ENCODE measurements at regions of chr2 and their contacts with region 1.

Region 1: GRCh38 chr2:30231212-30231995 is at the start of gene LBH:
- DNase-seq: peak; percentile 93
- ATAC-seq: peak; percentile 44
- H3K4me3 Mint-ChIP-seq: peak within 1 kb of the TSS; percentile 78
- H3K27ac Mint-ChIP-seq: peak within 1 kb of the TSS; percentile 97
- H3K4me1 Mint-ChIP-seq: peaks cover 63% of the 10 kb centered on the region
- H3K27me3 Mint-ChIP-seq: no peaks in the 10 kb centered on the region
- CTCF ChIP-seq: no peak
- total RNA-seq, gene LBH: 127 to 130 TPM

Region 2: GRCh38 chr2:30252723-30253701 is 21.6 kb after region 1 on chr2:
- CTCF ChIA-PET with region 1: interaction called, 216 read pairs
- POLR2A ChIA-PET with region 1: interaction called, 440 read pairs
- intact Hi-C with region 1: loop called (anchors 2 kb)
- DNase-seq: peak; percentile 88
- ATAC-seq: peak; percentile 67
- H3K4me3 Mint-ChIP-seq: peak overlapping the region; percentile 53
- H3K27ac Mint-ChIP-seq: peak overlapping the region; percentile 95
- H3K4me1 Mint-ChIP-seq: peaks cover 96% of the 10 kb centered on the region
- H3K27me3 Mint-ChIP-seq: peaks cover 2% of the 10 kb centered on the region
- CTCF ChIP-seq: no peak

Region 3: GRCh38 chr2:30266051-30266621 is 34.7 kb after region 1 on chr2:
- CTCF ChIA-PET with region 1: interaction called, 216 read pairs
- POLR2A ChIA-PET with region 1: interaction called, 440 read pairs
- intact Hi-C with region 1: loop called (anchors 5 kb)
- DNase-seq: peak; percentile 73
- ATAC-seq: peak; percentile 57
- H3K4me3 Mint-ChIP-seq: peak overlapping the region; percentile 76
- H3K27ac Mint-ChIP-seq: peak overlapping the region; percentile 99
- H3K4me1 Mint-ChIP-seq: peaks cover 81% of the 10 kb centered on the region
- H3K27me3 Mint-ChIP-seq: no peaks in the 10 kb centered on the region
- CTCF ChIP-seq: no peak

Region 4: GRCh38 chr2:30273261-30273861 is 42.0 kb after region 1 on chr2:
- CTCF ChIA-PET with region 1: interaction called, 3 read pairs
- POLR2A ChIA-PET with region 1: interaction called, 90 read pairs
- intact Hi-C with region 1: loop called (anchors 5 kb)
- DNase-seq: peak; percentile 73
- ATAC-seq: peak; percentile 68
- H3K4me3 Mint-ChIP-seq: peak overlapping the region; percentile 28
- H3K27ac Mint-ChIP-seq: peak overlapping the region; percentile 89
- H3K4me1 Mint-ChIP-seq: peaks cover 73% of the 10 kb centered on the region
- H3K27me3 Mint-ChIP-seq: no peaks in the 10 kb centered on the region
- CTCF ChIP-seq: no peak

Region 5: DNA sequence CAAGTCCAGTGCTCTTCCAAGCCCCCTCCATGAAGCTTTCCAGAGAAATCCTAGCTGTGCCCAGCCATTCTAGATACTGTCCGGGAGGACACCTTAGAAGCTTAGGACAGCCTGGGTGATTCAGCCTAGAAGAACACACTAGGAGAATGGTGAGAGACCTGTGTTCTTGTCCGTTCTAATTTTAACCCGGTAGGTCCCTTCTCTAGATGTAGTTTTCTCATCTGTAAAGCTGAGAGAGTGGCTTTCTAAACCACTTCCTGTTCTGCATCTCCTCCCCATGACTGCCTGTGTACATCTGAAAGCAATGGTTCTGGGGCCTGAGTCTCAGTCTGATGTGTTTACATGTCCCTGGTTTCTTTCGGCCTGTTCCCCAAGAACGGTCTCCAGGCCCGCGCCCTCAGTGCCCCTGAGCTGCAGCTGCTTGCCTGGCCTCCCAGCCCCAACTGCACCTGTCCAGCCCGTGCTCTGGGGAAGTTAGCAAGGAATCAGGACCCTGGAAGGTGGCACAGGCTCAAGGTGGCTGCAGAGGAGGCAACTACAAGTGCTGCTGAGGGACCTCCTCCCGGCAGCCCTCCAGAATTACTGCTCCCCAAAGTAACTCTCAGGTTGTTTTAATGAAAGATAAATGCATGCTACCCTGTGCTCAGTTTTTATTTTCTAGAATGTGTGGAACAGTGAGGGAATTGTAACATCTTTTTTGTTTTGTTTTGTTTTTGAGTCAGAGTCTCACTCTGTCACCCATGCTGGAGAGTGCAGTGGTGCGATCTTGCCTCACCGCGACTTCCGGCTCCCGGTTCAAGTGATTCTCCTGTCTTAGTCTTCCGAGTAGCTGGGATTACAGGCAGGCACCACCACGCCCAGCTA is 105.8 kb after region 1 on chr2:
- CTCF ChIA-PET with region 1: interaction called, 11 read pairs
- POLR2A ChIA-PET with region 1: interaction called, 11 read pairs
- intact Hi-C with region 1: loop called (anchors 5 kb)
- DNase-seq: peak; percentile 67
- ATAC-seq: peak; percentile 76
- H3K4me3 Mint-ChIP-seq: peak overlapping the region; percentile 59
- H3K27ac Mint-ChIP-seq: peak overlapping the region; percentile 96
- H3K4me1 Mint-ChIP-seq: peaks cover 78% of the 10 kb centered on the region
- H3K27me3 Mint-ChIP-seq: no peaks in the 10 kb centered on the region
- CTCF ChIP-seq: no peak

Region 6: GRCh38 chr2:30421604-30422443 is 190.4 kb after region 1 on chr2:
- CTCF ChIA-PET with region 1: interaction called, 4 read pairs
- POLR2A ChIA-PET with region 1: interaction called, 13 read pairs
- intact Hi-C with region 1: loop called (anchors 2 kb)
- DNase-seq: peak; percentile 65
- ATAC-seq: peak; percentile 49
- H3K4me3 Mint-ChIP-seq: peak overlapping the region; percentile 70
- H3K27ac Mint-ChIP-seq: peak overlapping the region; percentile 96
- H3K4me1 Mint-ChIP-seq: peaks cover 36% of the 10 kb centered on the region
- H3K27me3 Mint-ChIP-seq: no peaks in the 10 kb centered on the region
- CTCF ChIP-seq: no peak

Region 7: DNA sequence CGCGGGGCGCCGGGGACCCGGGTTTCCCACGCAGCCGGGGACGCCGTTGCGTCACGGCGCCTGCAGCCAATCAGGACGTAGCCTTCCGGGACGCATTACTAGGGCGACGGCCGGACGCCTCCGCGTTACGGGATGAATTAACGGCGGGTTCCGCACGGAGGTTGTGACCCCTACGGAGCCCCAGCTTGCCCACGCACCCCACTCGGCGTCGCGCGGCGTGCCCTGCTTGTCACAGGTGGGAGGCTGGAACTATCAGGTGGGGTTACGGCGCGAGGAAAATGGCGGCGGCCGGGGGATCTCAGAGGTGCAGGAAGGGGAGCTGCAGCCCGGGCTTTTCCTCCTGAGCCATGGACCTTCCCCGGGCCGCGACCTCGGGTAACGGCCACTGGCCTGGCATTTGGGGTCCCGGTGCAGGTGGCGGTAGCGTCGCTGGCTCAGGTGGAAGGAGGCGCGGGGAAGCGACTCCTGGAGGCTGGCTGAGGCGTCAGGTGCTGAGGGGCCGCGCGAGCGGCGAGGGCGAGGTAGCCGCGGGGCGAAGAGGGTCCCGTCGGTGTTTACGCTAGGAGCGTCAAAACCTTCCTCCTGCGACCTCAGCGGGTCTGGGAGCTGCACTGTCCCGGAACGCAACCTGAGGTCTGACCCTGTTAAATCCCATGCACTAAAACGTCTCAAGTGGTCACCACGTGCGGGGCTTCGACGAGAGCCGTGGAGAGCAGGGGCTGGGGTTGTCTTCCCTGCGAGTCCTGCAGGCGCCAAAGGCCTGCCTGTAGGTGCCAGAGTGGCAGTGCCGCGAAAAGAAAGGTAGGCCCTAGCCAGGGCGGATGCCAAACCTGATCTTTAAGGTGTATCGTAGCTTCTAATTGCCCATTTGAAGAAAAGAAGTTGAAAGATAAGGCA is 216.0 kb after region 1 on chr2 and contains the start of gene LCLAT1:
- CTCF ChIA-PET with region 1: no interaction called
- POLR2A ChIA-PET with region 1: interaction called, 14 read pairs
- intact Hi-C with region 1: no loop called
- DNase-seq: peak; percentile 90
- ATAC-seq: peak; percentile 88
- H3K4me3 Mint-ChIP-seq: peak within 1 kb of the TSS; percentile 89
- H3K27ac Mint-ChIP-seq: peak within 1 kb of the TSS; percentile 97
- H3K4me1 Mint-ChIP-seq: peaks cover 38% of the 10 kb centered on the region
- H3K27me3 Mint-ChIP-seq: no peaks in the 10 kb centered on the region
- CTCF ChIP-seq: no peak
- total RNA-seq, gene LCLAT1: 19.0 to 20.5 TPM

Measured in activated CD8-positive, alpha-beta T cell treated with anti-CD3 and anti-CD28 coated beads for 36 hours (primary cell).